IMR-90 (cell line): ENCODE measurements at regions of chr1 and their contacts with region 1.

Region 1: DNA sequence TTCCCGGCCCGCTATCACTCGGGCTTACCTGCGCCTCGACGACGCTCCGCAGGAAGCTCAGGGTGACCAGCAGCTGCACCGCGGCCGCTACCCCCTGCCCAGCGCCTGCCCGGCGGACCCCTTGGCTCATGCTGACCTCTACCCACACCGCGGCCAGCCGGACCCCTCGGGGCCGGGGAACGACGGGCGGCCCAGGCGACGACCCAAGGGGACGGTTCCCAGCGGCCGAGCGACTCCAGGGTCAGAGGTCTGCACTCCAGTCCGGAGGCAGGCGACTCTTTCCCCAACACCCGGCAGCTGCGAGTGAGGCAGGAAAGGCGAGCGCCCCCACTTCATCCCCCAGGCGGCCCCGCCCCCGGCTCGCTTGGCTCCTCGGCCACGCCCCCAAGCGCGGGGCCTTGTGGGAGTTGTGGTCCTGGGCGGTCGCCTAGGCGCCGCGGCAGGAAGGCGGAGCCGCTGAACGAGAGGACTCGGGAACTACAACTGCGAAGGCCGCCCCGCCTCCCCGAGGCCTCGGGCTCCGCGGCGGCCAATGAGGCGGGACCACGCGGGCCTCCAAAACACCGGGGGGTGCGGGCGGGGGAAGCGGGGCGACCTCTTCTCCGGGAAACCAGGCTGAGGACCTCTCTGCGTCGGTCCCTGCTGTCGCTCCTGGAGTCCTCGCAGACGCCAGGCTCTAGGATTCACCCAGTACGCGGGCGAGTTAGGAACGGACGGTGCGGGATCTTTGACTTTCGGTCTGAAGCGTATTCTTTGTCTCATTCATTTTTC is at the start of gene ERO1B:
- DNase-seq: peak; percentile 90
- ATAC-seq: peak; percentile 99
- H3K4me3 ChIP-seq: peak within 1 kb of the TSS; percentile 70
- H3K27ac ChIP-seq: no peak within 1 kb of the TSS
- H3K4me1 ChIP-seq: no peaks in the 10 kb centered on the region; the same call in 1 of the 2 replicates
- H3K27me3 ChIP-seq: peaks cover 5% of the 10 kb centered on the region
- CTCF ChIP-seq: no peak
- POLR2A ChIP-seq: peak; percentile 66; the same call in 1 of the 2 replicates
- RAD21 ChIP-seq: no peak
- total RNA-seq, gene ERO1B: 0.54 and 1.7 TPM in 2 replicates

Region 2: GRCh38 chr1:236103646-236104218 is 178.1 kb before region 1 on chr1:
- CTCF ChIA-PET with region 1: no interaction called
- POLR2A ChIA-PET with region 1: no interaction called
- dilution Hi-C with region 1: no loop called
- in situ Hi-C with region 1: no loop called
- intact Hi-C with region 1: loop called (anchors 2 kb)
- DNase-seq: peak; percentile 57
- ATAC-seq: peak; percentile 79
- H3K4me3 ChIP-seq: no peak overlapping the region
- H3K27ac ChIP-seq: no peak overlapping the region
- H3K4me1 ChIP-seq: peaks cover 2% of the 10 kb centered on the region; the same call in 1 of the 2 replicates
- H3K27me3 ChIP-seq: peaks cover 7% of the 10 kb centered on the region
- CTCF ChIP-seq: peak; percentile 88
- POLR2A ChIP-seq: no peak
- RAD21 ChIP-seq: peak; percentile 91

Region 3: GRCh38 chr1:236142253-236143103 is 139.4 kb before region 1 on chr1 and contains the start of gene GPR137B:
- CTCF ChIA-PET with region 1: no interaction called
- POLR2A ChIA-PET with region 1: no interaction called
- dilution Hi-C with region 1: no loop called
- in situ Hi-C with region 1: no loop called
- intact Hi-C with region 1: loop called (anchors 2 kb)
- DNase-seq: peak; percentile 54
- ATAC-seq: peak; percentile 76
- H3K4me3 ChIP-seq: peak within 1 kb of the TSS; percentile 78
- H3K27ac ChIP-seq: peak within 1 kb of the TSS; percentile 26; the same call in 1 of the 2 replicates
- H3K4me1 ChIP-seq: peaks cover 2% of the 10 kb centered on the region; the same call in 1 of the 2 replicates
- H3K27me3 ChIP-seq: peaks cover 27% of the 10 kb centered on the region
- CTCF ChIP-seq: no peak
- POLR2A ChIP-seq: no peak
- RAD21 ChIP-seq: no peak
- total RNA-seq, gene GPR137B: 4.5 and 5.3 TPM in 2 replicates

Region 4: GRCh38 chr1:236523701-236524141 is 241.9 kb after region 1 on chr1 and contains the start of gene LGALS8:
- CTCF ChIA-PET with region 1: no interaction called
- POLR2A ChIA-PET with region 1: no interaction called
- dilution Hi-C with region 1: no loop called
- in situ Hi-C with region 1: no loop called
- intact Hi-C with region 1: loop called (anchors 5 kb)
- DNase-seq: peak; percentile 80
- ATAC-seq: peak; percentile 84
- H3K4me3 ChIP-seq: peak within 1 kb of the TSS; percentile 61
- H3K27ac ChIP-seq: peak within 1 kb of the TSS; percentile 81
- H3K4me1 ChIP-seq: peaks cover 8% of the 10 kb centered on the region
- H3K27me3 ChIP-seq: no peaks in the 10 kb centered on the region
- CTCF ChIP-seq: 0 out of 2 replicates have a peak, but pooled peaks have one; percentile 2
- POLR2A ChIP-seq: peak; percentile 64
- RAD21 ChIP-seq: no peak
- total RNA-seq, gene LGALS8: 44.7 and 57.7 TPM in 2 replicates

Region 5: GRCh38 chr1:237416924-237417655 is 1135.3 kb after region 1 on chr1:
- CTCF ChIA-PET with region 1: no interaction called
- POLR2A ChIA-PET with region 1: no interaction called
- dilution Hi-C with region 1: no loop called
- in situ Hi-C with region 1: no loop called
- intact Hi-C with region 1: no loop called
- DNase-seq: no peak
- ATAC-seq: no peak
- H3K4me3 ChIP-seq: no peak overlapping the region
- H3K27ac ChIP-seq: no peak overlapping the region
- H3K4me1 ChIP-seq: no peaks in the 10 kb centered on the region
- H3K27me3 ChIP-seq: no peaks in the 10 kb centered on the region
- CTCF ChIP-seq: no peak
- POLR2A ChIP-seq: no peak
- RAD21 ChIP-seq: no peak